ENCODE measurements at regions of chr1 and their contacts with region 1.

Region 1: GRCh38 chr1:110816930-110817329 is 56.0 kb upstream of the CD53 start:
- DNase-seq: no peak
- H3K4me3 ChIP-seq: no peak overlapping the region
- H3K27ac ChIP-seq: no peak overlapping the region
- H3K4me1 ChIP-seq: no peaks in the 10 kb centered on the region
- H3K27me3 ChIP-seq: no peaks in the 10 kb centered on the region
- CTCF ChIP-seq: no peak
- EP300 ChIP-seq: no peak
- RAD21 ChIP-seq: no peak

Region 2: DNA sequence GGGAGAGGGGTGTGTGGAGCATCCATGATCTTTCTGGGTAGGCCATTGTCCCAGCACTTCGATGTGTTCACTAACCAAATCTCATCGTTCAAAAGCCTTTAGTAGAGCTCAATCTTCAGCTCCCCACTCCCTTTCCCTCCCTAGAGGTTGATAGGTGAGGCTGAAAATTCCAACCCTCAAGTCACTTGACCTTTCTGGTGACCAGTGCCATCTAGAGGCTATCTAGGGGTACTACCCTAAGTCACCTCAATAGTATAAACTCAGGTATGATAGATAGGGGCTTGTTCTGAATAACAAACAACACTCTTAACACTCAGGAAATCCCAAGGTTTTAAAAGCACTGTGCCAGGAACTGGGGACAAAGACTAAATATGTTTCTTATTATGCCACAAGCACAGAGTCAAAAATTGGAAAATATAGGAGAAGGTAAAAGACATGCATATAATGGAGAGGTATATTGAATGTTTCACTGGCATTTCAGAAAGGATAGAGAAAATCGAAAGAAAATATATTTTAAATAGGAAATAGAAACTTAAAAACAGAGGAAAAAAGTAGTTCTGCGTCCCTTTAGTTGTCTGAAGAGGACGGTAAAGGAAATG is 13.1 kb after region 1 on chr1:
- CTCF ChIA-PET with region 1: interaction called, 11 read pairs
- POLR2A ChIA-PET with region 1: no interaction called
- DNase-seq: peak; percentile 30
- H3K4me3 ChIP-seq: no peak overlapping the region
- H3K27ac ChIP-seq: no peak overlapping the region
- H3K4me1 ChIP-seq: no peaks in the 10 kb centered on the region
- H3K27me3 ChIP-seq: no peaks in the 10 kb centered on the region
- CTCF ChIP-seq: peak; percentile 78
- EP300 ChIP-seq: no peak
- RAD21 ChIP-seq: peak; percentile 43